ENCODE measurements at regions of chr1 and their contacts with region 1.

Region 1: GRCh38 chr1:44318097-44319088 is 36.7 kb downstream of the ERI3 start:
- DNase-seq: peak; percentile 74
- H3K4me3 ChIP-seq: no peak overlapping the region
- H3K27ac ChIP-seq: no peak overlapping the region
- H3K4me1 ChIP-seq: peaks cover 5% of the 10 kb centered on the region
- H3K27me3 ChIP-seq: no peaks in the 10 kb centered on the region
- CTCF ChIP-seq: peak; percentile 90

Region 2: DNA sequence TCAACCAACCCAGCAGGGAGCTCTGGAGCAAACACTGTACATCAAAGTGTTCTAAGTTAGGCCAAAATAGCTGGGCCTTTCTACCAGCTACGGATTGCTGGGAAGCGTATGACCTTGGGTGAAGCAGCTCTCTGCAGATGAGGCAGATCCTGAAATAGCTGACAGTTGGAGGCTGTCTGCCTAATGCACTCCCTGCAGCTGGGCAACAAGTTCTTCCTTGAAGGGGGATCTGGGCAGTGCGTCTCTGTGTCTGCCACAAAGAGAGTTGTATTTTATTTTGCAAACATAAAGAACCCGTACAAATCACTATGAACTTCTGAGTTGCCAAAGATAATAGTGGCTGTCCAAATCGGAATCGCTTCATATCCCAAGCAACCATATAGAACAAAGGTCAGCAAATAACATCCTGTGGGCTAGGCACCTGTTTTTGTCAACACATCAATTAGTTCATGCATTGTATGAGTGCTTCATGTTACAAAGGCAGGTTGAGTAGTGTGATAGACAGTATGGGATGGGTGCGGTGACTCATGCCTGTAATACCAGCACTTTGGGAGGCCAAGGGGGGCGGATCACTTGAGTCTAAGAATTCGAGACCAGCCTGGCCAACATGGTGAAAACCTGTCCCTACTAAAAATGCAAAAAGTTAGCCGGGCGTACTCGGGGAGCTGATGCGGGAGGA is 228.9 kb before region 1 on chr1:
- CTCF ChIA-PET with region 1: interaction called, 5 read pairs
- POLR2A ChIA-PET with region 1: no interaction called
- intact Hi-C with region 1: loop called (anchors 5 kb)
- DNase-seq: no peak
- H3K4me3 ChIP-seq: no peak overlapping the region
- H3K27ac ChIP-seq: no peak overlapping the region
- H3K4me1 ChIP-seq: no peaks in the 10 kb centered on the region
- H3K27me3 ChIP-seq: no peaks in the 10 kb centered on the region
- CTCF ChIP-seq: no peak

Region 3: DNA sequence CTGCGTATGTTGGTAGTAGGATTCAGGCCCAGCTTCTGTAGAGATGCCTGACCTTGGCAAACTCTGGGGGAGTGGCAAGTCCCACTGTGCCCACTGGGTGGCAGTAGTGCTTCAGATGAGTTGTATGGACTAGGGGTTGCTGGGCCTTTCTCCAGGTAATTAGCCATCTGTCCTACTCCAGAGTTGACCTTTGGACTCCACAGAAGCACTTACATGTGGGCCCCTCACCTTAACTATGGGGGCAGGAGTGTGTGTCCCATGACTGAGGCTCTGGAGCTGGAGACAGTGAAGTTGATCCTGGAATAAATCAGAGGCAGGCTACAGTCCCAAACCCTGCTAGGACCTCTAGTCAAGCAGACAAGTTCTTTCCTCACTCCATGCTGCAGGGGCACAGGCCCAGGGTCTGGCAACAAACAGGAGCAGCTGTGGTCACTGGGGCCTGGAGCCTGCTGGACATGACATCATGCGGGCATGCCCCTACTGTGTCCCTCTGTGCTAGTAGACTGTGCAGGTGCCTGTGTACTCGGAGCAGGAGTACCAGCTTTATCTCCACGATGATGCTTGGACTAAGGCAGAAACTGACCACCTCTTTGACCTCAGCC is 100.5 kb before region 1 on chr1:
- CTCF ChIA-PET with region 1: interaction called, 3 read pairs
- POLR2A ChIA-PET with region 1: no interaction called
- intact Hi-C with region 1: loop called (anchors 2 kb)
- DNase-seq: peak; percentile 72
- H3K4me3 ChIP-seq: no peak overlapping the region
- H3K27ac ChIP-seq: no peak overlapping the region
- H3K4me1 ChIP-seq: peaks cover under 1% of the 10 kb centered on the region
- H3K27me3 ChIP-seq: no peaks in the 10 kb centered on the region
- CTCF ChIP-seq: peak; percentile 94

Region 4: DNA sequence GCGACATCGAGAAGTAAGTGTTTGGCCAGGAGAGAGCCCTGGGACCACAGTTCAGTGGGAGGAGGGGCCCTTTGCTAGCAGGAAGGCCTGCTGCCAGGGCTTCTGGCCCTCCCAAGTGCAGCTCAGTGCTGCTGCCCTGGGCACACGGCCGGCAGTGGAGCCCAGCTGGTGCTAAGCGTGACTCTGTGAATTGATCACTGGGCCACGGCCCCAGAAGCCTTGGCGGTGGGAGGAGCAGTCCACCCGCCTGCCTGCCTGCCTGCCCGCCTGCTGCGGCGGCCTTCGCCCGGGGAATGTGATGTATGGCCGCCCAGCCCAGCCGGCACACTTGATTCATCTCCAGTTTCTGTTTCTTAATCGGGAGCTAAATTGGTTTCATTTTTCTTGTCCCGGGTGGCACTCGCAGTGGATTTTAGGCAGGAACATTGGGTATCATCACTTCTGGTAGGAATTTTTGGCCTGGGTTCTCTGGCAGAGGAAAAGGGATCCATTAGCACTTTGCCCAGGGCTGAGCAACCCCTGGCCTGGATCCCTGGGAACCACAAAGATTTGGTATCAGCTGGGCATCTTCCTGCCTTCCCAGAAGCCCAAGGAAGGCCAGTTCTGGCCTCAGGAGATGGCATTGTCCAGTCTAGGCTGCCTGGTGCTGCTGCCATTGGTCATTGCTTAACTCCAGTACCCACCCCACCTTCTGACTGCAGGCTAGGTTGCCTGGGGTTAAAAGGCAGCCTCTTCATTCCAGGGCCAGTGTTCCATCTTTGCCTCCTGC is 327.3 kb after region 1 on chr1:
- CTCF ChIA-PET with region 1: no interaction called
- POLR2A ChIA-PET with region 1: no interaction called
- intact Hi-C with region 1: no loop called
- DNase-seq: no peak
- H3K4me3 ChIP-seq: no peak overlapping the region
- H3K27ac ChIP-seq: no peak overlapping the region
- H3K4me1 ChIP-seq: no peaks in the 10 kb centered on the region
- H3K27me3 ChIP-seq: no peaks in the 10 kb centered on the region
- CTCF ChIP-seq: no peak

Measured in A673 (cell line).